Activated CD4-positive, alpha-beta memory T cell treated with anti-CD3 and anti-CD28 coated beads, Interleukin-2, amount 10 ng/mL, durations not matched to agents 7 days and 5 days (primary cell): ENCODE measurements at regions of chr7 and their contacts with region 1.

Region 1: DNA sequence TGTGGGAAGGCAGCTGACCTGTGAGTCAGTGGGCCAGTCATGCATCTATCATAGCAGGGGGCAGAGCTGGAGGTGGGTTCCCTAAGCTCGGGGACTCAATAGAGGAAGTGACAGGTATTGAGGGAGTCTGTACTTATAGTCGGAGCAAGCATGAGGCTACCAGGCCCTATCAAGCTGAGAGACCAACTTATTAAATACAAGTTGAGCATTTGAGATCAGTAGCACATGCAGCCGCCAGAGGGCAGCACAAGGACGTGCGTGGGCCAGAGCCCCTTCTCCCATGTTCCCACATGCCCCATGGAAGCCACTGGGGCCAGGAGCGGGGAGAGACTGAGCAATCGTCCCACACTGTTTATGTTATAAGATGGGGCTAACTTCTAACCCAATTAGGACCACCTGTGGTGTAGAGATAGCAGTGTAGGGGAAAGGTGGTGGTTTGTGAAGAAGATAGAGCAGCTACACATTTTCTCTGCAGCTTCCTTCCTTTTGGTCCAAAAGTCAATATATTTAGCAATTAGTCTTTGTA is 13.0 kb upstream of the STK31 start:
- DNase-seq: peak; percentile 58
- H3K4me3 Mint-ChIP-seq: no peak overlapping the region
- H3K27ac Mint-ChIP-seq: no peak overlapping the region
- H3K4me1 Mint-ChIP-seq: no peaks in the 10 kb centered on the region
- H3K27me3 Mint-ChIP-seq: no peaks in the 10 kb centered on the region

Region 2: GRCh38 chr7:23454881-23455506 is 242.0 kb before region 1 on chr7:
- CTCF ChIA-PET with region 1: no interaction called
- POLR2A ChIA-PET with region 1: no interaction called
- DNase-seq: no peak
- H3K4me3 Mint-ChIP-seq: no peak overlapping the region
- H3K27ac Mint-ChIP-seq: no peak overlapping the region
- H3K4me1 Mint-ChIP-seq: no peaks in the 10 kb centered on the region
- H3K27me3 Mint-ChIP-seq: peaks cover 45% of the 10 kb centered on the region

Region 3: GRCh38 chr7:23546897-23547572 is 149.9 kb before region 1 on chr7:
- CTCF ChIA-PET with region 1: interaction called, 12 read pairs
- POLR2A ChIA-PET with region 1: no interaction called
- DNase-seq: peak; percentile 81
- H3K4me3 Mint-ChIP-seq: no peak overlapping the region
- H3K27ac Mint-ChIP-seq: no peak overlapping the region
- H3K4me1 Mint-ChIP-seq: peaks cover 10% of the 10 kb centered on the region
- H3K27me3 Mint-ChIP-seq: no peaks in the 10 kb centered on the region

Region 4: DNA sequence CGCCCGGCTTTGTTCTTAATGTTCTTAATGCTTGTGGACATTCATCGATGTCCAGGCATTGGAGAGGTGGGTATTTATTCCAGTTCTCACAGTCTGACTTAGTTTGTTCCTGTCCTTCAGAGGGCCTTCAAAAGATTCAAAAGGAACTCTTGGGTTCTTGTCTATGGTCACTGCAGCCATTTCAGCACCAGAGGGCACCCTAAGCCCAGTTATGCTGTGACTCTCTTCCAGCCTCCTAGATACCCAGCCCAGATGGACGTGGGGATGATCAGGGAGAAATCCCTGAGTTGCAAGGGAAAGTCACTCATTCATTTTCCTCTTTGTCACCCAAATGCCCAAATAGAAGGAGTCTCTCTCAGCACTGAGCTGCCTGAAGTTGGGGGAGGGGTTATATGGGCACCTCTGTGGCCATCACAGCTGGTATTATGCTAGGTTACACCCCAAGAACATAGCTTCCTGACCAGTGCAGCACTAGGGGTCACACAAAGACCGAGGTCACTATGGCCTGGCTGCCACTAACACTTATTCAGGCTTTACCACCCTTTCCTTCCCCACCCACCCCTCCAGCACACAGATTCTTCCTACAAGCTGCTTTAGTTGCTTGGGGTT is 126.3 kb before region 1 on chr7:
- CTCF ChIA-PET with region 1: interaction called, 18 read pairs
- POLR2A ChIA-PET with region 1: no interaction called
- DNase-seq: peak; percentile 75
- H3K4me3 Mint-ChIP-seq: no peak overlapping the region
- H3K27ac Mint-ChIP-seq: no peak overlapping the region
- H3K4me1 Mint-ChIP-seq: no peaks in the 10 kb centered on the region
- H3K27me3 Mint-ChIP-seq: peaks cover 8% of the 10 kb centered on the region

Region 5: DNA sequence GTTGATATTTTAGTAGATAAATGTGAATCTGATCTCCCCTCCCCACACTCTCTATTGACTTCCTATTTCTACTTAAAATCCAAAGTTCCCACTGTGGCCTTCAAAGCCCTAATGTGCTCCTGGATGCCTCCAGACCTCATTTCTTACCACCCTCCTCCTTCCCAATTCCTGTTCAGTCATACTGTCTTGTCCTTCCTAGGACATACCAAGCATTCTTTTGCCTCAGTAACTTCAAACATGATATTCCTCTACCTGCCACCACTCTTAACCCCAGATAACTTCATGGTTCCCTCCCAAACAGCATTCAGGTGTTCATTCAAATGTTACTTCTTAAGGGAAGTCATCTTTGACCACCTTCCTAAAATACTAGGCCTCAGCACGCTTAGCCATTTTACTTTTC is 51.2 kb before region 1 on chr7:
- CTCF ChIA-PET with region 1: no interaction called
- POLR2A ChIA-PET with region 1: no interaction called
- DNase-seq: no peak
- H3K4me3 Mint-ChIP-seq: no peak overlapping the region
- H3K27ac Mint-ChIP-seq: no peak overlapping the region
- H3K4me1 Mint-ChIP-seq: no peaks in the 10 kb centered on the region
- H3K27me3 Mint-ChIP-seq: no peaks in the 10 kb centered on the region

Region 6: GRCh38 chr7:23679898-23680413 is 17.0 kb before region 1 on chr7 and contains the start of gene FAM221A:
- CTCF ChIA-PET with region 1: interaction called, 31 read pairs
- POLR2A ChIA-PET with region 1: interaction called, 3 read pairs
- DNase-seq: peak; percentile 84
- H3K4me3 Mint-ChIP-seq: peak within 1 kb of the TSS; percentile 78
- H3K27ac Mint-ChIP-seq: no peak within 1 kb of the TSS
- H3K4me1 Mint-ChIP-seq: peaks cover 13% of the 10 kb centered on the region
- H3K27me3 Mint-ChIP-seq: peaks cover 9% of the 10 kb centered on the region
- total RNA-seq, gene FAM221A: 6.3 to 7.7 TPM

Region 7: DNA sequence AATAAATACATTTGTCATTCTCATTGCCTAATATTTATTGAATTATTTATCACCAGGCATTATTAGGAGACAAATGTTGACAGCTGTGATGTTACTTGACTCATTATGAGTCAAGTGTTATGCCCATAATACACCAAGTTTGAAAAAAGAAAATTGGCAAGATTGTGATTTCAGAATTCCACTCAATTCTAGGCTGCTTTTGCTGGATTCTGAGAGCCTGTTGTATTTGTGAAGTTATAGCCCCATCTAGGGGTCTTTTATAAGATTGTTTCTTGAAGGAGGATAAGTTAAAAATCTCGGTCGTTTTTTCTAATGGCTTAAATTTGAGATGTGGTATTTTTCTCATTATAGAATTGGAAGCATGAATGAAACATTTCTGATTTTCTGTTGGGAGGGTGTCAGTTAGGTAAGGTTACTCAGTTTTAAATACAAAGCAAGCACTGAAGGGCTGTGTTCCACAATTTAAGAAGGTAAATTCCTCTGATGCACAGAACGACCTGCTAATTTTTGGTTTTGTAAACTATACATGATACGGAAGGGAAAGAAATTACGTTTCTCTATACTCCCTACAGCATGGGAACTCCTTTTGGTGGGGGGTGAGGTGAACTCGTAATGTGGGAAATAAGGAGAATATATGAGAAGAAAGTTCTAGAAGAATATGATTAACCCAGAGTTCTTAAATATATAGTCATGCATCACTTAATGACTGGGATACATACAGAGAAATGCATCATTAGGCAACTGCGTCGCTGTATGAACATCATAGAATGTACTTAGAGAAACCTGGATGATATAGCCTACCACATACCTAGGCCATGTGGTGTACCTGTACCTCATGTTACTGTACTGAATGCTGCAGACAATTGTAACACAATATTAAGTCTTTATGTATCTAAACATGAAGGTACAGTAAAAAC is 15.6 kb after region 1 on chr7:
- CTCF ChIA-PET with region 1: interaction called, 21 read pairs
- POLR2A ChIA-PET with region 1: no interaction called
- DNase-seq: no peak
- H3K4me3 Mint-ChIP-seq: no peak overlapping the region
- H3K27ac Mint-ChIP-seq: no peak overlapping the region
- H3K4me1 Mint-ChIP-seq: no peaks in the 10 kb centered on the region
- H3K27me3 Mint-ChIP-seq: no peaks in the 10 kb centered on the region

Region 8: GRCh38 chr7:23852135-23852534 is 155.2 kb after region 1 on chr7:
- CTCF ChIA-PET with region 1: no interaction called
- POLR2A ChIA-PET with region 1: no interaction called
- DNase-seq: no peak
- H3K4me3 Mint-ChIP-seq: no peak overlapping the region
- H3K27ac Mint-ChIP-seq: no peak overlapping the region
- H3K4me1 Mint-ChIP-seq: no peaks in the 10 kb centered on the region
- H3K27me3 Mint-ChIP-seq: peaks cover 2% of the 10 kb centered on the region

Region 9: DNA sequence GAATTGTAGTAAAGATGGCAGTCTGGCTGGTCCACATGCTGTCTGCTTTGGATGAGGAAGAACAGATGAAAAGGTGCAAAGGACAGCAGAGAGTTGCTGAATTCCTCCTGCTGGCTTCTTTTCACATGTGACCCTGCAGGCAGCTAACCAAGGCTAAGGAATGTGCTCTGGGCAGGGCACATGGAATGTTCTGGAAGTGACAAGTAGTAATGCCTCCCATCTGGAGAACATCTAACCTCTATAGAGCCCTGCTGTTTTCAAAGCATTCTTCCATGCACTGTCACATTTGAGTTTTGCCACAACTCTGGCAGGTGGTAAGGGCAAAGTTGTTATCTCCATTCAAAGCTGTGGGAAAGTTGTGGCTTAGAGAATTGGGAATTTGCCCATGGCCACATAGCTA is 221.9 kb after region 1 on chr7:
- CTCF ChIA-PET with region 1: no interaction called
- POLR2A ChIA-PET with region 1: no interaction called
- DNase-seq: no peak
- H3K4me3 Mint-ChIP-seq: no peak overlapping the region
- H3K27ac Mint-ChIP-seq: no peak overlapping the region
- H3K4me1 Mint-ChIP-seq: no peaks in the 10 kb centered on the region
- H3K27me3 Mint-ChIP-seq: peaks cover 9% of the 10 kb centered on the region